Activated naive CD4-positive, alpha-beta T cell treated with anti-CD3 and anti-CD28 coated beads for 36 hours (primary cell): ENCODE measurements at regions of chr1 and their contacts with region 1.

Region 1: GRCh38 chr1:33127001-33127791 is 46.2 kb downstream of the AZIN2 start:
- DNase-seq: peak; percentile 99
- H3K4me3 Mint-ChIP-seq: peak overlapping the region; percentile 94
- H3K27ac Mint-ChIP-seq: peak overlapping the region; percentile 91
- H3K4me1 Mint-ChIP-seq: peaks cover 39% of the 10 kb centered on the region
- H3K27me3 Mint-ChIP-seq: no peaks in the 10 kb centered on the region

Region 2: GRCh38 chr1:32801096-32801715 is 326.0 kb before region 1 on chr1:
- CTCF ChIA-PET with region 1: no interaction called
- intact Hi-C with region 1: loop called (anchors 1 kb)
- DNase-seq: peak; percentile 68
- H3K4me3 Mint-ChIP-seq: peak overlapping the region; percentile 34
- H3K27ac Mint-ChIP-seq: peak overlapping the region; percentile 88
- H3K4me1 Mint-ChIP-seq: peaks cover 63% of the 10 kb centered on the region
- H3K27me3 Mint-ChIP-seq: no peaks in the 10 kb centered on the region

Region 3: GRCh38 chr1:32981003-32981901 is 145.9 kb before region 1 on chr1:
- CTCF ChIA-PET with region 1: no interaction called
- intact Hi-C with region 1: loop called (anchors 2 kb)
- DNase-seq: peak; percentile 85
- H3K4me3 Mint-ChIP-seq: peak overlapping the region; percentile 30
- H3K27ac Mint-ChIP-seq: peak overlapping the region; percentile 91
- H3K4me1 Mint-ChIP-seq: peaks cover 44% of the 10 kb centered on the region
- H3K27me3 Mint-ChIP-seq: no peaks in the 10 kb centered on the region

Region 4: GRCh38 chr1:33050221-33051076 is 76.7 kb before region 1 on chr1:
- CTCF ChIA-PET with region 1: no interaction called
- intact Hi-C with region 1: no loop called
- DNase-seq: no peak
- H3K4me3 Mint-ChIP-seq: no peak overlapping the region
- H3K27ac Mint-ChIP-seq: no peak overlapping the region
- H3K4me1 Mint-ChIP-seq: peaks cover 2% of the 10 kb centered on the region
- H3K27me3 Mint-ChIP-seq: no peaks in the 10 kb centered on the region

Region 5: GRCh38 chr1:33065301-33065700 is 61.9 kb before region 1 on chr1:
- CTCF ChIA-PET with region 1: no interaction called
- intact Hi-C with region 1: no loop called
- DNase-seq: no peak
- H3K4me3 Mint-ChIP-seq: no peak overlapping the region
- H3K27ac Mint-ChIP-seq: no peak overlapping the region
- H3K4me1 Mint-ChIP-seq: no peaks in the 10 kb centered on the region
- H3K27me3 Mint-ChIP-seq: peaks cover 2% of the 10 kb centered on the region

Region 6: DNA sequence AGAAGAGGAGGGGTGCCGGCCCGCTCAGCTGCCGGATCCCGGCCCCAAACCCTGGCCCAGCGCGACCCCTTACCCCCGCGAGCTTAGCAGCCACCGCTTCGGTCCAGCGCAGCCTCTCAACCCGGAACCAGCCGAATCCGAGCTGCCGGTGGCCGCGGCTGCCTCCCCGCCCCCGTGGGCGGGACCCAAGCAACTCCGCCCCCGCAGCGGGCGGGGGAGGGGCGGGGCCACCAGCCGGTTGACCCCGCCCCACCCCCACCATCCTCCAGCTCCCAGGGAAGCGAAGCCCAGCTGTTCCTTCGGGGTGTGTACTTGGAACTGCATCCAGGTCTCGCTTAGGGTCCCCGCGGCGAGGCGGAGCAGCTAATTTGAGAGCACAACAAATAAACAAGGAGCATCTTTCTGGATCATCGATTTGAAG is 54.7 kb after region 1 on chr1 and contains the start of gene TRIM62:
- CTCF ChIA-PET with region 1: interaction called, 4 read pairs
- intact Hi-C with region 1: loop called (anchors 1 kb)
- DNase-seq: peak; percentile 69
- H3K4me3 Mint-ChIP-seq: peak within 1 kb of the TSS; percentile 86
- H3K27ac Mint-ChIP-seq: no peak within 1 kb of the TSS
- H3K4me1 Mint-ChIP-seq: peaks cover 10% of the 10 kb centered on the region
- H3K27me3 Mint-ChIP-seq: no peaks in the 10 kb centered on the region
- total RNA-seq, gene TRIM62: 1.5 TPM

Region 7: GRCh38 chr1:33349778-33350610 is 222.8 kb after region 1 on chr1:
- CTCF ChIA-PET with region 1: no interaction called
- intact Hi-C with region 1: loop called (anchors 1 kb)
- DNase-seq: peak; percentile 76
- H3K4me3 Mint-ChIP-seq: peak overlapping the region; percentile 89
- H3K27ac Mint-ChIP-seq: peak overlapping the region; percentile 84
- H3K4me1 Mint-ChIP-seq: peaks cover 45% of the 10 kb centered on the region
- H3K27me3 Mint-ChIP-seq: no peaks in the 10 kb centered on the region

Region 8: GRCh38 chr1:33472349-33472980 is 345.3 kb after region 1 on chr1 and contains the start of gene ZSCAN20:
- CTCF ChIA-PET with region 1: interaction called, 4 read pairs
- intact Hi-C with region 1: loop called (anchors 1 kb)
- DNase-seq: peak; percentile 96
- H3K4me3 Mint-ChIP-seq: peak within 1 kb of the TSS; percentile 84
- H3K27ac Mint-ChIP-seq: peak within 1 kb of the TSS; percentile 83
- H3K4me1 Mint-ChIP-seq: peaks cover 24% of the 10 kb centered on the region
- H3K27me3 Mint-ChIP-seq: no peaks in the 10 kb centered on the region
- total RNA-seq, gene ZSCAN20: 2.5 to 2.6 TPM